CD8-positive, alpha-beta T cell (primary cell): ENCODE measurements at regions of chr3 and their contacts with region 1.

Region 1: GRCh38 chr3:31132132-31132769 is 237.8 kb upstream of the GADL1 start:
- DNase-seq: peak in 2 of 9 experiments; percentile 45 to 57
- ATAC-seq: no peak
- H3K4me3 ChIP-seq: no peak overlapping the region
- H3K4me3 Mint-ChIP-seq: no peak overlapping the region
- H3K27ac ChIP-seq: no peak overlapping the region
- H3K27ac Mint-ChIP-seq: peak overlapping the region; percentile 13
- H3K4me1 ChIP-seq: no peaks in the 10 kb centered on the region
- H3K4me1 Mint-ChIP-seq: no peaks in the 10 kb centered on the region
- H3K27me3 ChIP-seq: no peaks in the 10 kb centered on the region
- H3K27me3 Mint-ChIP-seq: no peaks in the 10 kb centered on the region
- CTCF ChIP-seq: peak; percentile 31

Region 2: GRCh38 chr3:30012941-30013543 is 1119.2 kb before region 1 on chr3:
- CTCF ChIA-PET with region 1: interaction called, 3 read pairs
- POLR2A ChIA-PET with region 1: no interaction called
- intact Hi-C with region 1: loop called (anchors 1 to 10 kb)
- DNase-seq: peak; percentile 7 to 60 (median 53)
- ATAC-seq: no peak
- H3K4me3 ChIP-seq: no peak overlapping the region
- H3K4me3 Mint-ChIP-seq: no peak overlapping the region
- H3K27ac ChIP-seq: no peak overlapping the region
- H3K27ac Mint-ChIP-seq: no peak overlapping the region
- H3K4me1 ChIP-seq: no peaks in the 10 kb centered on the region
- H3K4me1 Mint-ChIP-seq: no peaks in the 10 kb centered on the region
- H3K27me3 ChIP-seq: no peaks in the 10 kb centered on the region
- H3K27me3 Mint-ChIP-seq: peaks cover 5% of the 10 kb centered on the region
- CTCF ChIP-seq: peak; percentile 72

Region 3: GRCh38 chr3:30112902-30113484 is 1019.3 kb before region 1 on chr3:
- CTCF ChIA-PET with region 1: no interaction called
- POLR2A ChIA-PET with region 1: no interaction called
- intact Hi-C with region 1: loop called (anchors 2 to 10 kb)
- DNase-seq: peak in 2 of 9 experiments; percentile 43 to 61
- ATAC-seq: no peak
- H3K4me3 ChIP-seq: no peak overlapping the region
- H3K4me3 Mint-ChIP-seq: no peak overlapping the region
- H3K27ac ChIP-seq: no peak overlapping the region
- H3K27ac Mint-ChIP-seq: no peak overlapping the region
- H3K4me1 ChIP-seq: no peaks in the 10 kb centered on the region
- H3K4me1 Mint-ChIP-seq: peaks cover 6% of the 10 kb centered on the region
- H3K27me3 ChIP-seq: no peaks in the 10 kb centered on the region
- H3K27me3 Mint-ChIP-seq: no peaks in the 10 kb centered on the region
- CTCF ChIP-seq: peak; percentile 78

Region 4: GRCh38 chr3:30768703-30769685 is 363.3 kb before region 1 on chr3:
- CTCF ChIA-PET with region 1: interaction called, 6 read pairs
- POLR2A ChIA-PET with region 1: no interaction called
- intact Hi-C with region 1: loop called (anchors 1 kb)
- DNase-seq: peak; percentile 34 to 80 (median 68)
- ATAC-seq: peak; percentile 48
- H3K4me3 ChIP-seq: no peak overlapping the region
- H3K4me3 Mint-ChIP-seq: no peak overlapping the region
- H3K27ac ChIP-seq: no peak overlapping the region
- H3K27ac Mint-ChIP-seq: no peak overlapping the region
- H3K4me1 ChIP-seq: no peaks in the 10 kb centered on the region
- H3K4me1 Mint-ChIP-seq: peaks cover 3% of the 10 kb centered on the region
- H3K27me3 ChIP-seq: no peaks in the 10 kb centered on the region
- H3K27me3 Mint-ChIP-seq: peaks cover 6% of the 10 kb centered on the region
- CTCF ChIP-seq: peak; percentile 76

Region 5: DNA sequence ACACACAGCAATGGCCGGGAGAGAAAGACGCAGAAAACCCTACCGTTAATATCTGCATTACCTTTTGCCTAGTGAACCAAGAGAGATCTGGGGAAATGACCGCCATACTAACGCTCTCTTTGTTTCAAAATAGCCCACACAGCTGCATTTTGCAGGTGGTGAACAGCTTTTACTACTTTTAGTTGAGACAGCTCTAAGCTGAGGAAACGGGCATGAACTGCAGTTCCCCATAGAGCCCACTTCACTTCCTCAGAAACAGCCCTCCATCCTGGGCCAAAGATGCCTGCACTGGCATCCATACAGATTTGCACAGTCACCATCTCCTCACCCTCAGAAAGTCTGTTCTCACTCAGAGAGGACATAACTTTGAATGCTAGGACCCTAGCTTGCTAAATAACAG is 894.3 kb after region 1 on chr3:
- CTCF ChIA-PET with region 1: no interaction called
- POLR2A ChIA-PET with region 1: no interaction called
- intact Hi-C with region 1: no loop called
- DNase-seq: no peak
- ATAC-seq: no peak
- H3K4me3 ChIP-seq: no peak overlapping the region
- H3K4me3 Mint-ChIP-seq: no peak overlapping the region
- H3K27ac ChIP-seq: no peak overlapping the region
- H3K27ac Mint-ChIP-seq: no peak overlapping the region
- H3K4me1 ChIP-seq: no peaks in the 10 kb centered on the region
- H3K4me1 Mint-ChIP-seq: no peaks in the 10 kb centered on the region
- H3K27me3 ChIP-seq: no peaks in the 10 kb centered on the region
- H3K27me3 Mint-ChIP-seq: peaks cover 12% of the 10 kb centered on the region
- CTCF ChIP-seq: no peak